CD4-positive, alpha-beta memory T cell (primary cell): ENCODE measurements at regions of chr21 and their contacts with region 1.

Region 1: DNA sequence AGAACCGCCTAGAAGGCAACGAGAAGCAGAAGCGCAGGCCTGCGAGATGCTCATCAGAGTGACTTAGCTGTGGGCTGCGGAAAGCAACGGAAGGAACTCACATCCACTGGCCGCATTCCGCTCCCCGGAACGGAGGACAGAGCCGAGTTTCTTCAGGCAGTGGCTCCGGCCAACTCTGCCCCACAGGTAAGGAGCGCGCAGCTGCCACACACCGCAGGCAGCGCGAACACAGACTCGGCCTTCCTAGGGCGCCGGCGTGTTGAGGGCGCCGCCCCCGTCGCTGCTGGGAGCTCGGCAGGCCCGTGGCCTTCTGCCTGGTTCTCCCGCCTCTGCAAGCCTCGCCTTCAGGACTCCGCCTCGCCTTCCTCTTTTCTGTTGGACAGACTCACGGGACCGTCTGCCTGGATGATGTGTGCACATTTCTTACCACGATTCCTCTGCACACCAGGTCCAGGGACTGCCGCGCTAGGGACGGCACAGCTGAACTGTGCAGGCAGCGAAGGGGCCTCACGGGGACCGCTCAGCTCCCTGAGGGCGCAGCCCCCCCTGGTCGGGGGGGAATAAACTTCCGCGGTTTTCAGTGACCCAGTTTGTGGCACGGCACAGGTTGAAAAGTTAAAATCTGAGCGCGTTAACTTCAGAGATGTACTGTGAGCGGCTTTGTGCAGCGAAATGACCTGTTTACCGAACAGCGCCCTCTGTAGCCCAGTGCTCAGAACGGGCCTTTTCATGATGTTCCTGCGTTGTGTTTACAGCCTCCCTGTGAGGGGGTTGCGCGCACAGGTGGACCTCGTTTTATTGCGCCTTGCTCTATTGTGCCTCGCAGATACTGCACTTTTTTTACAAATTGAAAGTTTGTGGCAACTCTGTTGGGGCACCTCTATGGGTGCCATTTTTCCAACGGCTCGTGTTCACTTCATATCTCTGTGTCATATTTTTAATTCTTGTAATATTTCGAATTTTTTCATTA is 15.8 kb downstream of the TCP10L start:
- DNase-seq: peak; percentile 82 to 86 (median 85)
- H3K4me3 ChIP-seq: peak overlapping the region; percentile 76 to 96
- H3K4me3 Mint-ChIP-seq: peak overlapping the region; percentile 88 to 95 (median 94)
- H3K27ac ChIP-seq: peak overlapping the region; percentile 79
- H3K27ac Mint-ChIP-seq: peak overlapping the region; percentile 88 to 97 (median 93)
- H3K4me1 ChIP-seq: peaks cover 18% of the 10 kb centered on the region
- H3K4me1 Mint-ChIP-seq: peaks cover 5 to 26% (median 14%) of the 10 kb centered on the region in 4 donors
- H3K27me3 ChIP-seq: no peaks in the 10 kb centered on the region
- H3K27me3 Mint-ChIP-seq: peaks cover 0 to 1% of the 10 kb centered on the region in 2 donors

Region 2: GRCh38 chr21:32403201-32403777 is 166.3 kb before region 1 on chr21:
- CTCF ChIA-PET with region 1: interaction called, 15 read pairs
- POLR2A ChIA-PET with region 1: interaction called, 14 read pairs
- intact Hi-C with region 1: loop called (anchors 1 kb)
- DNase-seq: peak; percentile 63 to 68 (median 65)
- H3K4me3 ChIP-seq: no peak overlapping the region
- H3K4me3 Mint-ChIP-seq: no peak overlapping the region
- H3K27ac ChIP-seq: no peak overlapping the region
- H3K27ac Mint-ChIP-seq: peak overlapping the region in 2 of 7 donors; percentile 7 to 27
- H3K4me1 ChIP-seq: no peaks in the 10 kb centered on the region
- H3K4me1 Mint-ChIP-seq: peaks cover 4 to 21% (median 6%) of the 10 kb centered on the region in 4 donors
- H3K27me3 ChIP-seq: peaks cover 9% of the 10 kb centered on the region
- H3K27me3 Mint-ChIP-seq: peaks cover 1 to 7% of the 10 kb centered on the region in 2 donors

Region 3: DNA sequence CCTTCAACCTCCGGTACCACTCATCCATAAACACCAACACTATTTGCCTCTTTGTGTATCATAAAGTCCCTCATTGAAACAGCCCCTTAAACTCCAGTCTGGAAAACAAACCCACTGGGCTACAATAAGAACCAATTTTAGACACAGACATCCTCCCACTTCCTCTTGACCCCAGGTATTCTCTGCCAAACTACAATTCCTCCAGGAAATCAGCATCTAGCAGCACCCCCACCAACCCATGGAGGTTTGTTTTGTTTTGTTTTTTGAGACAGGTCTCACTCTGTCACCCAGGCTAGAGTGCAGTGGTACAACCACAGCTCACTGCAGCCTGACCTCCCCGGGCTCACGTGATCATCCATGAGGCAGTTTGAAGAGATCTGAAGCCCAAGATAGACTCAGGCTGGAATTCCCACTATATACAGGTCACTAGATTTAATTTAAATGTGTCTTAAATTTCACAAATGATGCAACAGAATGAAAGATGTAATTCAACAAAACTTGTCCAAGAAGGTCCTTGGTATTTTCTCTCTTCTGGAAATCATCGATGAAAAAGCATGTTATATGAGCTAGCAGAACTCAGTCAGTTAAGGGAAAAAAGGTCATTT is 14.6 kb before region 1 on chr21:
- CTCF ChIA-PET with region 1: interaction called, 5 read pairs
- POLR2A ChIA-PET with region 1: interaction called, 10 read pairs
- intact Hi-C with region 1: no loop called
- DNase-seq: no peak
- H3K4me3 ChIP-seq: no peak overlapping the region
- H3K4me3 Mint-ChIP-seq: no peak overlapping the region
- H3K27ac ChIP-seq: no peak overlapping the region
- H3K27ac Mint-ChIP-seq: peak overlapping the region in 4 of 7 donors; percentile 2 to 30 (median 9)
- H3K4me1 ChIP-seq: no peaks in the 10 kb centered on the region
- H3K4me1 Mint-ChIP-seq: peaks cover 0 to 15% (median 4%) of the 10 kb centered on the region in 4 donors
- H3K27me3 ChIP-seq: no peaks in the 10 kb centered on the region
- H3K27me3 Mint-ChIP-seq: no peaks in the 10 kb centered on the region

Region 4: DNA sequence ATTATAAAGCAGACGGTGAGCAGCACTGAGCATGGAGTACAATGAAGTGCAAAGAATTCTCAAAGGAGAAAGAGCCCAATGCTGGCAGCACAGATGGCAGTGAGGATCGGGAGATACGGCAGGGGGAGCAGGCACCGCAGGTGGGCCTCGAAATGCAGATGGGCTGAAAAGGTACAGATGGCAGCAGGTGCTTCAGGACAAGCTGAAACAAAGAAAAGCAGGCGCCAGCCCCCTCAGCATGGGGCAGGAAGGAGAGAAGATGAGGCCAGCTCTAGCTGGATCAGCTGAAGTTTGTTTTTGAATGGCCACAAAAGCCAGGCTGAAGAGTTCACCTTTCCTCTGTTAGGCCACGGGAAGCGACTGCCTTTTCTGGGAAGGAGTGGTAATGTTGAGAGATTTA is 34.9 kb after region 1 on chr21:
- CTCF ChIA-PET with region 1: interaction called, 21 read pairs
- POLR2A ChIA-PET with region 1: no interaction called
- intact Hi-C with region 1: loop called (anchors 1 kb)
- DNase-seq: no peak
- H3K4me3 ChIP-seq: no peak overlapping the region
- H3K4me3 Mint-ChIP-seq: no peak overlapping the region
- H3K27ac ChIP-seq: no peak overlapping the region
- H3K27ac Mint-ChIP-seq: peak overlapping the region in 1 of 7 donors; percentile 57
- H3K4me1 ChIP-seq: no peaks in the 10 kb centered on the region
- H3K4me1 Mint-ChIP-seq: peaks cover 0 to 11% (median 7%) of the 10 kb centered on the region in 4 donors
- H3K27me3 ChIP-seq: no peaks in the 10 kb centered on the region
- H3K27me3 Mint-ChIP-seq: no peaks in the 10 kb centered on the region

Region 5: GRCh38 chr21:32978341-32979270 is 409.1 kb after region 1 on chr21:
- CTCF ChIA-PET with region 1: no interaction called
- POLR2A ChIA-PET with region 1: no interaction called
- intact Hi-C with region 1: no loop called
- DNase-seq: no peak
- H3K4me3 ChIP-seq: no peak overlapping the region
- H3K4me3 Mint-ChIP-seq: no peak overlapping the region
- H3K27ac ChIP-seq: no peak overlapping the region
- H3K27ac Mint-ChIP-seq: no peak overlapping the region
- H3K4me1 ChIP-seq: no peaks in the 10 kb centered on the region
- H3K4me1 Mint-ChIP-seq: no peaks in the 10 kb centered on the region
- H3K27me3 ChIP-seq: no peaks in the 10 kb centered on the region
- H3K27me3 Mint-ChIP-seq: peaks cover 15 to 24% of the 10 kb centered on the region in 2 donors